ENCODE measurements at regions of chr16 and their contacts with region 1.

Region 1: GRCh38 chr16:740764-741505 is at the start of gene CIAO3:
- DNase-seq: peak; percentile 85
- H3K27ac ChIP-seq: peak within 1 kb of the TSS; percentile 81
- CTCF ChIP-seq: peak; percentile 94

Region 2: DNA sequence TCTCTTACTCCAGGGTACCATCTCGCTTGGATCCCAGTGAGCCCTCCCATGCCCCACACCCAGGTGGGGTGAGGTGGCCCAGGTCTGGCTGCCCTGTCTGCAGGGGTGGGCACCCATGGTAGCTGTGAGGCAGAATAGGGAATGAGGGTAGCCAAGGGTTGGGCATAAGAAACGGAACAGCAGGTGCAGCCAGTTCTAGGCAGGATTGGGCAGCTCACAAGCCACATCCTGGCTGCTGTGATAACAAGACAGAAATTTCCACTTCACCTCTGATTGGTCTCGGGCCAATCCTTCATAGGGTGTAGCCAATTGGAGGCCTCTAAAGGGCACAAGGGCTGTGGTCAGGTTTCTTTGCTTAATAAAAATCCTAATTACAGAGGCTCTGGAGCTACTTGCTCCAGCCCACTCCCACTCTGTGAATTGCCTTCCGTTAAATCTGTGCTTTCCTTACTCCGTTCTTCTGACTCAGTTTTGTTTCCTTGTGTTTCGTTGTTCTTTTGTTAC is 462.0 kb before region 1 on chr16:
- CTCF ChIA-PET with region 1: no interaction called
- POLR2A ChIA-PET with region 1: no interaction called
- DNase-seq: peak; percentile 61
- H3K27ac ChIP-seq: no peak overlapping the region
- CTCF ChIP-seq: no peak

Region 3: GRCh38 chr16:495127-495748 is 245.7 kb before region 1 on chr16:
- CTCF ChIA-PET with region 1: no interaction called
- POLR2A ChIA-PET with region 1: no interaction called
- DNase-seq: peak; percentile 26
- H3K27ac ChIP-seq: peak overlapping the region; percentile 48; the same call in 1 of the 2 replicates
- CTCF ChIP-seq: peak; percentile 34; the same call in 1 of the 2 replicates

Region 4: DNA sequence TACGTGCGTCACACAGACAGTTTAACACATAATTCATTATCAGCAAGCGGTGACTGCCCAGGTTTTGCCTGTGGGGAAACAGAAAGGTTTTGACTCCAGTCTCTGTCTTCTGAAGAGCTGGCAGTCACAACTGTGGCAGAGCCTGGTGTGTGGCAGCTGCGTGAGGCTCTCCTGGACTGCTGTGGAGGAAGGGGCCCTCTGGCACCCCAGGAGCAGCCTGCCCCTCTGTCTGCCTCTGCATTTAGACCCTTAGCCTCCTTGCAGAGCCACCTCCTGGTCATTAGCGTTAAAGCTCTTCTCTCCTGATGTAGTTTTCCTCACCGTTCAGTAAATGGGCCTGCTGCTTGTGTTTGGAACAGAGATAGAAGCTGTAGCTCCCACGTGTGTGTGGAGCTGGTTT is 140.2 kb before region 1 on chr16:
- CTCF ChIA-PET with region 1: no interaction called
- POLR2A ChIA-PET with region 1: no interaction called
- DNase-seq: no peak
- H3K27ac ChIP-seq: peak overlapping the region; percentile 46
- CTCF ChIP-seq: peak; percentile 26

Region 5: DNA sequence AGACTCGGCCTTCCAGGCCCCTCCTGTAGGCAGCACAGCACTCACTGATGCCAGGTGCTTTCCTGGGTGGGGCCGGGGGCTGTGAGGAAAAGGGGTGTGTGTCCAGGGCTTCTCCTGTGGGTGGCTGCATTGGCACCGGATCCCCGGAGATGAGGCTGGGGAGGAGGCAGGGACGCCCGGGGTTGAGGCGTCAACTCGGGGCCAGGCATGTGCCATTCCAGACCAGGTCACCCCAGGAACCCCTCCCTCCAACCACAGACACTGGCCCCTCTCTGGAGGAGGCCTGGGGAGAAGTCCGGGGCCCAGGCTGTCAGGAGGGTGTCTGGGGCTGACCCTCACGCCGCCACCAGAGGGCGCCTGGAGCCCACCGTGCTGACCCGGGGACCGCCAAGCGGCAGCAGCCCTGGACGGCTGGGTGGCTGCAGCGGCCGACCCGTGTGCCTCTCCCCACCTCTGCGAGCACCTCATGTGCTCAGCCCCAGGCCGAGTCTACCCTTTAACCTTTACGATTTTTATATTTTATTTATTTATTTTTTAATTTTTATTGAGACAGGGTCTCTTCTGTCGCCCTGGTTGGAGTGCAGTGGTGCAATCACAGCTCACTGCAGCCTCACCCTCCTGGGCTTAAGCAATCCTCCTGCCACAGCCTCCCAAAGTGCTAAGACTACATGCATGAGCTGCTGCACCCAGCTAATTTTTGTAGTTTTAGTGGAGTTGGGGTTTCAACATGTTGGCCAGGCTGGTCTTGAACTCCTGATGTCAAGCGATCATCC is 29.2 kb before region 1 on chr16:
- CTCF ChIA-PET with region 1: interaction called, 11 read pairs
- POLR2A ChIA-PET with region 1: no interaction called
- DNase-seq: peak; percentile 70
- H3K27ac ChIP-seq: peak overlapping the region; percentile 95
- CTCF ChIP-seq: peak; percentile 92